ENCODE measurements at regions of chr20 and their contacts with region 1.

Region 1: DNA sequence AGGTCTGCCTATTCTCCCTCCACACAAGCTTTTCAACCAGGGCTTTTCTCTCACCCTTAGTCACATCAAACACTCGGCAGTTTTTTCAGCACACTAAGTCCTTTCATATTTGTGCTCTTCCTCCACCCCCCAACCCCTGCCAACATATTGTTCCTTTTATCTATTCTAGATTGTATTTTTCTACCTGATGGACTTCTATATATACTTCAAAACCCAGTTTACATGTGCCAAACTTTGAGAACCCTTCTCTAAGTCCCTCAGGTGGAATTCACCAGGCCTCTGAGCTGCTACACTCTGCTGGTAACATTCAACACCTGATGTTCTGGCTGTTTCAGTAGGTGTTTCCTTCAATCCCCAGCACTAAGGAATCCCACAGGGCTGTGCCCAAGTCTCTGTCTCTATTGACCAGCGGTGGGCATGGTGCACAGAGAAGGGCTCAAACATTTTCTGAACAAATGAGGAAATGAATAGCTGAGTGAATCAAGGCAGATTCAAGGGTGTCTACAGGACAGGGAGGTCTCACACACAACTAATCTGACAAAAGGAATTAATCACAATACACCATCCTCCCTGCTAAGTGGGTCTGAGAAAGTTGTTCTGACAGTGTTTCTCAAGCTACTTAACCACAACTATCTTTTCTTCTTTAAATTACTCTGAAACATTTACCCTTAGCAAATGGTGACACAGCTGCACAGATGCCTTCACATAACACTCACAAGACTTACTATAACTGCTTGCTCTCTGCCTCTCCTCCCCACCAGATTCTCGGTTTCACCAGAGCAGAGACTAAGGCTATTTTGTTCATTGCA is 166.5 kb downstream of the TSHZ2 start:
- DNase-seq: peak; percentile 52
- H3K4me3 ChIP-seq: no peak overlapping the region
- H3K27ac ChIP-seq: peak overlapping the region; percentile 62
- H3K4me1 ChIP-seq: peaks cover 22% of the 10 kb centered on the region
- CTCF ChIP-seq: no peak

Region 2: GRCh38 chr20:53040693-53041589 is 97.7 kb before region 1 on chr20:
- CTCF ChIA-PET with region 1: no interaction called
- POLR2A ChIA-PET with region 1: no interaction called
- intact Hi-C with region 1: loop called (anchors 5 kb)
- DNase-seq: peak; percentile 92
- H3K4me3 ChIP-seq: peak overlapping the region; percentile 16
- H3K27ac ChIP-seq: peak overlapping the region; percentile 66
- H3K4me1 ChIP-seq: peaks cover 49% of the 10 kb centered on the region
- CTCF ChIP-seq: no peak

Region 3: DNA sequence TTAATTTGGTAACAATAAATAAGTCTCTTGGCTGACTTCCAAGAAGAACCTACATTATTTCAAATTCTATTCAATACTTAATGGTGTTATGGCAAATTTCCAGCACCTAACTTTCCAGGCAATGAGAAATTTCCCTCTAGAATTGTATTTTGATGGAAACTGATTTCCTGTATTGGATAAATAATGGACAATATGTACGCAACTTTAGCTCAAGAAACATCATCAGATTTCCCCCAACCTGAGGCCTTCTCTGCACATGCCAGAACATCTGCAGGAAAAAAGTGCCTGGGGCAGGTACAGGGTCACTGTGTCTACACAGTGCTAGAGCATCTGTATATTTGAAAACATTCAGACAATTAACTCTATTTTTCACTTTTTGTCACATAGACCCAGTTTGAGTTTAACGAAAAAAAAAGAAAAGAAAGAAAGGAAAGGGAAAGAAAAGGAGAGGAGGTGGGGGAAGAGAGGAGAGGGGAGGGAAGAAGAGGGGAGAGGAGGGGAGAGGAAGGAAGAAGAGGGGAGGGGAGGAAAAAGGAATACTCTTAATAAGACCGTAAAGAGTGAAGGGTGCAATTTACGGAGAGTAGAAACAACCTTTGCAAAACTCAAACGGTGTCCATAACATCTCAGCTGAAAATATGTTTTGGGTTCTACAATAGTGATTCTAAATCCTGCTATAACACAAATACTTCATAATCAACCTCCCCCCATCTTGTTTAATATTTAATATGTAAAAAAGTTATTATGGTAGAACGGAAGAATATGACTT is 36.5 kb before region 1 on chr20:
- CTCF ChIA-PET with region 1: no interaction called
- POLR2A ChIA-PET with region 1: interaction called, 10 read pairs
- intact Hi-C with region 1: no loop called
- DNase-seq: no peak
- H3K4me3 ChIP-seq: no peak overlapping the region
- H3K27ac ChIP-seq: peak overlapping the region; percentile 72
- H3K4me1 ChIP-seq: peaks cover 35% of the 10 kb centered on the region
- CTCF ChIP-seq: no peak

Region 4: GRCh38 chr20:53116733-53117132 is 21.9 kb before region 1 on chr20:
- CTCF ChIA-PET with region 1: no interaction called
- POLR2A ChIA-PET with region 1: interaction called, 11 read pairs
- intact Hi-C with region 1: no loop called
- DNase-seq: no peak
- H3K4me3 ChIP-seq: no peak overlapping the region
- H3K27ac ChIP-seq: no peak overlapping the region
- H3K4me1 ChIP-seq: peaks cover 9% of the 10 kb centered on the region
- CTCF ChIP-seq: no peak

Region 5: GRCh38 chr20:53157443-53158408 is 19.1 kb after region 1 on chr20:
- CTCF ChIA-PET with region 1: interaction called, 4 read pairs
- POLR2A ChIA-PET with region 1: interaction called, 9 read pairs
- intact Hi-C with region 1: loop called (anchors 1 kb)
- DNase-seq: peak; percentile 79
- H3K4me3 ChIP-seq: peak overlapping the region; percentile 35
- H3K27ac ChIP-seq: peak overlapping the region; percentile 83
- H3K4me1 ChIP-seq: peaks cover 40% of the 10 kb centered on the region
- CTCF ChIP-seq: peak; percentile 83

Region 6: DNA sequence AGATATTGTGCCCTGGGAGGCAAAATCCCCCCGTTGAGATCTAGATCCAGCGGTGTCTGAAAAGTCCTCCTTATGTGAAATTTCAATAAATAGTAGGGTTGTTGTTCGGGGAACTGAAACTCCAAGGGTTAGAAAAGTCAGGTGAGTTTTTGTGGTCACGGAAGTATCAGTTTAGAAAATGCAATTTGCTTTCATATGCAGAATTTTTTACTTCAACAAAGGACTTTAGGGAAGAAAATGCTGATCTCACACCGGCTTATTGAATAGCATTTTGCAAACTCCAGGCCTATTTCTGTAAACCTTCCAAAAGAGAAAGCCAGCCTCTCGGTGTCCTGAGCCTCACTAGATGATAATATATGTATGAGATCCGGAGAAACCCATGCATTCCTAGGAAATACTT is 88.2 kb after region 1 on chr20:
- CTCF ChIA-PET with region 1: no interaction called
- POLR2A ChIA-PET with region 1: no interaction called
- intact Hi-C with region 1: no loop called
- DNase-seq: peak; percentile 79
- H3K4me3 ChIP-seq: peak overlapping the region; percentile 52
- H3K27ac ChIP-seq: peak overlapping the region; percentile 80
- H3K4me1 ChIP-seq: peaks cover 26% of the 10 kb centered on the region
- CTCF ChIP-seq: 0 out of 2 replicates have a peak, but pooled peaks have one; percentile 18

Region 7: DNA sequence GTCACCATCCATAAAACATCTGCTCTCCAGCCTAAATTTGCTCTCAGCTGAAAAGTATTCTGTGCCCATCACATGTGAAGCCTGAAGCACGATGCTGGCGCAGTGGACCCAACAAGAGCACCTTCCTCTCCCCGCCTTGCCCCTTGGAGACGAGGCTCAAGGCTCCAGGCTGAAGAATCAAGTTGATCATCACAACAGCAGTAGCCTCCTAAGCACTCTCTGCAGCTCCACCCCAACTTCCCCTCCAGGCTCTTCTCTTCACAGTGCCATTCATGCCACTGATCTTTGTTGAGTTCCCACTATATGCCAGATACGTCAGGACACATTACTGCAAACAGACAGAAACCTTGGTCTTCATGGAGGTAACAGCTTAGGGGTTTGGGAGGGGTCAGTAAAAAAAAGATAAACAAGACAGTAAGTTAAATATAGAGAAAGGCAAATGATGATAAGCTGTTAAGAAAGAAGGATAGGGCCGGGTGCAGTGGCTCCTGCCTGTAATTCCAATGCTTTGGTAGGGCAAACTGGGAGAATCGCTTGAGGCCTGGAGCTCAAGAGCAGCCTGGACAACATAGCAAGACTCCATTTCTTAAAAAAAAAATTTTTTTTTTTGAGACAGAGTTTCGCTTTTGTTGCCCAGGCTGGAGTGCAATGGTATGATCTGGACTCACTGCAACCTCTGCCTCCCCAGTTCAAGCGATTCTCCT is 496.7 kb after region 1 on chr20:
- CTCF ChIA-PET with region 1: no interaction called
- POLR2A ChIA-PET with region 1: no interaction called
- intact Hi-C with region 1: no loop called
- DNase-seq: no peak
- H3K4me3 ChIP-seq: no peak overlapping the region
- H3K27ac ChIP-seq: no peak overlapping the region
- H3K4me1 ChIP-seq: peaks cover 13% of the 10 kb centered on the region
- CTCF ChIP-seq: no peak